Left cardiac atrium (tissue), 4 donors: ENCODE measurements at regions of chr3 and their contacts with region 1.

Region 1: GRCh38 chr3:128725932-128726690 is at the start of gene RAB7A:
- DNase-seq: peak; percentile 98
- ATAC-seq: peak; percentile 98 to 99
- total RNA-seq, gene RAB7A: 204 to 255 TPM

Region 2: GRCh38 chr3:128787256-128788240 is 61.4 kb after region 1 on chr3:
- intact Hi-C with region 1: loop called in 1 of 2 experiments (anchors 10 kb)
- DNase-seq: no peak
- ATAC-seq: peak in 1 of 2 donors; percentile 20

Region 3: DNA sequence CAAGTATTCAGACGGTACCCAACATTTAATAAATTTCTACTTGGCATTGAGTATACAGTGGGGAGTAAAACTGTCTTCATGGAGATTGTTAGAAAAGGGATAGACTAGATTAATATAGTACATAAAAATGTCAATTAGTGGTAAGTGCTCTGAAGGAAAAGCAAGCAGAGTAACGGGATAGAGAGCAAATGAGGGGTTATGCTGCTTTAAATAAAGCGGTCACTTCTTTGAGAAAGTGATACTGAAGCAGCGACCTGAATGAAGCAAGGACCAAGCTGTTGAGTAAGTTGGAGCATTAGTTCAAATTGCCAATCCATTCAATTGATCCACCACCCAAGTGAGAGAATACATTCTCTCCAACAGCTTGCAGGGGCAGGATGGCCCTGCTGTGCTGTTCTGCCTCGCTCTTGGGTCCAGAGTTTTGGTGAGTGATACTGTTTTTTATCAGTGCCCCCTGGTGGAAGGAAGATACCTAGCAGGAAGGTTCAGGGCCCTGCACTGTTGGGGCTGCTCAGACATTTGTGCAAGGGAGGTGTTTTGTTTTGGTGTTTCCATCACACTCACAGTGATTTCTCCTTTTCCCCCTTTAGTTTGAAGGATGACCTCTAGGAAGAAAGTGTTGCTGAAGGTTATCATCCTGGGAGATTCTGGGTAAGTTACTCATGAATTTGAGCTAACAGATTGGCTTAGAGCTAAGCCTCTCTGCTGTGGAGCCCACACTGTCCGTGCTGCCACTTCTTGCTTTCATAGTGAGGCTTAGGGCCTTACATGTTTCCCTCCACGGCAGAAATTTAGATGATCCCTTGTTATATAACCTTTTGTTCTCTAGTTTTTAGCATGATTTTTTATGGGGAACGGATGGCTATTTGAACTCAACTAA is 68.9 kb after region 1 on chr3:
- intact Hi-C with region 1: loop called in 1 of 2 experiments (anchors 5 kb)
- DNase-seq: peak; percentile 50
- ATAC-seq: peak; percentile 93 to 97

Region 4: DNA sequence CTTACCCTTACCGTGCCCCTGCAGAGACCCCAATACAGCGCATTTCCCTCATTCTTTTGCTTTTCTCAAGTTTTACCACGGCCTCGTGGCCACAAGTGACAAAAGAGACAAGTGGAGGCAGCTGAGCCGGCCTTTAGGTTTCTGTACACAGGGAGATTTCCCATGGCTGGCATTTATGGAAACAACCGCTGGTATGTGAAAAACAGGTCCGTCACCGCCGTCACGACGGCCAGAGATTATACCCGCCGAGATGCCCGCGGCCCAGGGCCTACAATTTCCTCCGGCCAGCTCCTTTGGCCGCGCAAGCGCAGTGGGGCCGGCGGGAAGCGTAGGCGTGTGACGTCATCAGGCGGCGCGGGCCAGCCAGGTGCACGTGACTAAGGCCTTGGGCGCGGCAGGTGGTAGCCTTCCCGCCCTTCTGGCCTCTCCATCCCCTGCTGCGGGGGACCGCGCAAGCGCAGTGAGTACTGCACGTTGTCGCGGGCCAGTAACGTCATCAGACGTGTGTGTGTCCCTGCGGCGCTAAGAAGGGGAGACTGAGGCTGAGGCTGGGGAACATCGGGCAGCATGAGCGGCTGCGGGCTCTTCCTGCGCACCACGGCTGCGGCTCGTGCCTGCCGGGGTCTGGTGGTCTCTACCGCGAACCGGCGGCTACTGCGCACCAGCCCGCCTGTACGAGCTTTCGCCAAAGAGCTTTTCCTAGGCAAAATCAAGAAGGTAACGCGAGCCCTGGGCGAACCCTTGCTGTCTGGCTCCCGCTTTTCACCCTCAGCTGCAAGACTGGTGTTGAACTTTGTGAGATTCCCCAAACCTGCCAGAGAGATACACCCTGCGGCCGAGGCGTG is 153.2 kb after region 1 on chr3 and contains the start of gene ACAD9:
- intact Hi-C with region 1: loop called in 1 of 2 experiments (anchors 5 kb)
- DNase-seq: peak; percentile 97
- ATAC-seq: peak; percentile 98
- total RNA-seq, gene ACAD9: 35.3 to 37.5 TPM

Region 5: DNA sequence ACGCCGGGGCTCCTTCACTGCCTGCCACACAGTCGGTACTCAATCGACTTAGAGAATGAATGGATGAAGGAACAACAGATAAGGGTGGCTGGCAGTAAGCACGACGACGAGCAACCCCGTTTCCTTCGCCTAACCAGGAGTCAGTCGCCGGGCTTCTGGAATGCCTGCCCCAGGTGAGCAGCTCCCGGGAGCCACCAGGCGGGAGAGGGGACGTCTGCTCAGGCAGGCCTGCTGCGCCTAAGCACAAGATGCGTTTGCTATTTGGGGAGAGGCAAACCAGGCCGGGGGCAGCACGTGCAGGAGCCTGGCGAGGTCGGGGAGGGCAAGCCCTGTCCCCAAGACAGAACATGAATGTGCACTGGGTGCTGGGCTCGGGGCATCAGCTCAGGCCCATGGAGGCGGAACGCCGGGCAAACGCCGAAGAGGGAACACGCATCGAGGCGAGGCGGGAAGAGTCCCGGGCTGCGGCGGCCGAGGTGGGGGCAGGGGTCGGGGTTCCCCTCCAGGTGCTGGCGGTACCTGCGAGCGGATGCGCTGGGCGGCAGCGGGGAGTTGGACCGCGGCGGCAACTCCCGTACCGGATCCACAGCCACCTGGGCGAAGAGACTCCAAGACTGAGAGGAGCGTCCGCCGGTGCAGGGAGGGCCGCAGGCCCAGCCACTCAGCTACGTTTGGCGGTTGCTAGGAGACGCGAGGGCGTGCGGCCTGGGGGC is 267.5 kb after region 1 on chr3 and contains the start of gene CFAP92:
- intact Hi-C with region 1: no loop called
- DNase-seq: peak; percentile 92
- ATAC-seq: peak; percentile 98 to 99
- total RNA-seq, gene CFAP92: 0.29 to 0.73 TPM

Region 6: GRCh38 chr3:129068291-129068886 is 342.3 kb after region 1 on chr3:
- intact Hi-C with region 1: no loop called
- DNase-seq: no peak
- ATAC-seq: peak; percentile 73 to 81